Caco-2 (cell line): ENCODE measurements at regions of chr13 and their contacts with region 1.

Region 1: GRCh38 chr13:108895220-108895704 is 265.9 kb downstream of the MYO16 start:
- DNase-seq: peak in 1 of 2 experiments; percentile 52
- H3K4me3 ChIP-seq: no peak overlapping the region
- H3K4me3 Mint-ChIP-seq: no peak overlapping the region
- H3K27ac Mint-ChIP-seq: no peak overlapping the region
- H3K4me1 ChIP-seq: no peaks in the 10 kb centered on the region
- H3K4me1 Mint-ChIP-seq: no peaks in the 10 kb centered on the region
- H3K27me3 ChIP-seq: no peaks in the 10 kb centered on the region
- H3K27me3 Mint-ChIP-seq: no peaks in the 10 kb centered on the region
- CTCF ChIP-seq: peak; percentile 26 to 53

Region 2: DNA sequence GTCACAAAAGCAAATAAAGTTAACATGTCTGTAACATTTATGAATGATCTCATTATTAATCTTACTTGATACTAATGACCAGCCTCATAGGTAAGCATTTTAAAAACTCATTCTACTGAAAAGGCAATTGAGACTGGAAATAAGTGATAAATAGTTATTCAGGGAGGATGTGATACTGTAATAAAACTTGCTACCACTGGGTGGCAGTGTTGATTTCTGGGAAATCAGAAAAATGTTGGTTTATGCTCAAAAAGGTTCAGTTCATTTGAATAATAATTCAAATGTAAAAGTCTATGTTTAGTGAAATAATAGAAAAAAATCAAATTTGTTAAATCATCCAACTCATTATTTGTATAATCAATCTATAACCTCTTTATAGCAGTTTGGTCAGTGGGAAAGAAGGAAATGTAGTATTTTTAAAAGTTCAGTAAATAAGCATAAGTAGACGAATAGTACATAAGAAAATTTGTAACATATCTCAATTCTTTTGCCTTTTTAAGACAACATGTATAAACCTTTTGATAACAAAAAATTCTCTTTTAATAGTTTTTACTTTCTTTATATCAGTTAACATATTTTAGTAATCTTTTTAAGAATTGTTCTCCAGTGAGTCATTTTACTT is 667.5 kb before region 1 on chr13:
- CTCF ChIA-PET with region 1: no interaction called
- POLR2A ChIA-PET with region 1: no interaction called
- intact Hi-C with region 1: loop called (anchors 2 kb)
- DNase-seq: peak in 1 of 2 experiments; percentile 60
- H3K4me3 ChIP-seq: no peak overlapping the region
- H3K4me3 Mint-ChIP-seq: no peak overlapping the region
- H3K27ac Mint-ChIP-seq: no peak overlapping the region
- H3K4me1 ChIP-seq: peaks cover 28% of the 10 kb centered on the region
- H3K4me1 Mint-ChIP-seq: peaks cover 28% of the 10 kb centered on the region
- H3K27me3 ChIP-seq: no peaks in the 10 kb centered on the region
- H3K27me3 Mint-ChIP-seq: no peaks in the 10 kb centered on the region
- CTCF ChIP-seq: peak; percentile 64 to 68

Region 3: GRCh38 chr13:108342369-108343289 is 552.6 kb before region 1 on chr13:
- CTCF ChIA-PET with region 1: interaction called, 7 read pairs
- POLR2A ChIA-PET with region 1: no interaction called
- intact Hi-C with region 1: loop called (anchors 1 kb)
- DNase-seq: no peak
- H3K4me3 ChIP-seq: no peak overlapping the region
- H3K4me3 Mint-ChIP-seq: no peak overlapping the region
- H3K27ac Mint-ChIP-seq: no peak overlapping the region
- H3K4me1 ChIP-seq: no peaks in the 10 kb centered on the region
- H3K4me1 Mint-ChIP-seq: peaks cover 5% of the 10 kb centered on the region
- H3K27me3 ChIP-seq: no peaks in the 10 kb centered on the region
- H3K27me3 Mint-ChIP-seq: peaks cover 7% of the 10 kb centered on the region
- CTCF ChIP-seq: peak; percentile 56 to 60

Region 4: DNA sequence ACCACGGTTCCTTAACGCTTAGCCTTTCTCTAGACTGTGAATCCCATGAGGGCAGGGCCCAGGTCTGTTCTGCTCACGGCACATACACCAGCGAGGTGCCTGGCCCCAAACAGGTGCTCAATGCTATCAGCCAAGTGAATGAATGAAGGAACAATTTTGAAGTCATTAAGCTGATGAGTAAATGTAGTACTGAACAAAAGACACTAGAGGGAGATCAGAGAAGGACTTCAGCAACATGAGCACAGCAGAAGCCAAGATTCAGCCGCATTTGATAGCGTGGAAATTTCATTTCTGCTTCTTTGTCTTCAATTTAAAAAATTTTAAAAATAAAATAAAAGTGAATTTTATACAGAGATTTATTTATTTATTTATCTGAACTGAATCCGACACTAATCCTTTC is 285.9 kb before region 1 on chr13:
- CTCF ChIA-PET with region 1: interaction called, 20 read pairs
- POLR2A ChIA-PET with region 1: no interaction called
- intact Hi-C with region 1: loop called (anchors 1 kb)
- DNase-seq: no peak
- H3K4me3 ChIP-seq: no peak overlapping the region
- H3K4me3 Mint-ChIP-seq: no peak overlapping the region
- H3K27ac Mint-ChIP-seq: no peak overlapping the region
- H3K4me1 ChIP-seq: no peaks in the 10 kb centered on the region
- H3K4me1 Mint-ChIP-seq: no peaks in the 10 kb centered on the region
- H3K27me3 ChIP-seq: no peaks in the 10 kb centered on the region
- H3K27me3 Mint-ChIP-seq: no peaks in the 10 kb centered on the region
- CTCF ChIP-seq: peak in 1 of 2 experiments; percentile 50

Region 5: GRCh38 chr13:108769213-108770070 is 125.8 kb before region 1 on chr13:
- CTCF ChIA-PET with region 1: no interaction called
- POLR2A ChIA-PET with region 1: no interaction called
- intact Hi-C with region 1: loop called (anchors 10 kb)
- DNase-seq: peak in 1 of 2 experiments; percentile 9
- H3K4me3 ChIP-seq: no peak overlapping the region
- H3K4me3 Mint-ChIP-seq: no peak overlapping the region
- H3K27ac Mint-ChIP-seq: no peak overlapping the region
- H3K4me1 ChIP-seq: peaks cover 9% of the 10 kb centered on the region; the same call in 1 of the 2 replicates
- H3K4me1 Mint-ChIP-seq: peaks cover 10% of the 10 kb centered on the region
- H3K27me3 ChIP-seq: no peaks in the 10 kb centered on the region
- H3K27me3 Mint-ChIP-seq: peaks cover 3% of the 10 kb centered on the region
- CTCF ChIP-seq: no peak